Testis (tissue), 5 donors: ENCODE measurements at regions of chr1 and their contacts with region 1.

Region 1: DNA sequence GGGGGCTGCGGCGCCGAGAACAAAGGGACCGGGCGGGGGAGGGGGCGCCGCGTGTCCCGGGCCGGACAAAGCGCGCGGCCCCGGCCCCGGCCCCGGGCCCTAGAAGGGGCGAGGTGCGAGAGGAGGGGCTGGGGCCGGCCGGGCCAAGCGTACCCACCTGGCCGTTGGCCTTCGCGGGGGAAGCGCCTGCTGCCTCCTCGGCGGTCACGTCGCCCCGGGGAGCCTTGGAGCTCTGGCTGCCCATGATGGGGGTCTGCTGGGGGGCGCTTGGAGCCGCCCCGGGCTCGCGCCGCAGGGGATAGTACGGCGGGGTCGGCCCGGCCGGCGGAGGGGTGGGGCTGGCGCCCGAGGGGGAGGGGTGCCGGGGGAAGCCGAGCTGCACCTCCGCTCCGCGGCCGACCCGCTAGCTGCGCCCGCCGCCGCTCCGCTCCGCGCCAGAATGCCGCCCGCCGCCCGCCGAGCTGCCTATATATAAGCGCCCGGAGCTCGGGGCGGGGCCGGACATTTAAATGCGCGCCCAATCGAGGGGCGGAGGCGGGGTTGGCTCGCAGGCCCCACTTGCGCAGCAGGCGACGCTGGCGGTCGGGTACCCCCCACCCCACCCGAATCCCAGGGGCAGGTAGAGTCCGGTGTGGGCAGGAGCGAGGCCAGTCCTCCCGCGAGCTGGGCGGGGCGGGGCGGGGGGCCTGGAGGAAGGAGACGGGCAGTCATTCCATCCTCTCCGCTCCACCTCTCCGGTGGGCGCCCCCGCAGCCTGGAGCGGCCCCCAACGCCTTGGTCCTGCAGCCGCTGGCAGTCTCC is at the start of gene MARCKSL1:
- DNase-seq: peak; percentile 93
- H3K4me3 ChIP-seq: peak within 1 kb of the TSS; percentile 75 to 94
- H3K27ac ChIP-seq: peak within 1 kb of the TSS; percentile 81 to 96
- H3K4me1 ChIP-seq: peaks cover 51% of the 10 kb centered on the region
- H3K27me3 ChIP-seq: no peaks in the 10 kb centered on the region
- CTCF ChIP-seq: no peak
- POLR2A ChIP-seq: peak; percentile 74
- total RNA-seq, gene MARCKSL1: 288 to 312 TPM

Region 2: GRCh38 chr1:32013386-32014198 is 322.4 kb before region 1 on chr1 and contains the start of gene KHDRBS1:
- intact Hi-C with region 1: no loop called
- DNase-seq: peak; percentile 99
- H3K4me3 ChIP-seq: peak within 1 kb of the TSS; percentile 86 to 100
- H3K27ac ChIP-seq: peak within 1 kb of the TSS; percentile 92 to 99
- H3K4me1 ChIP-seq: peaks cover 14% of the 10 kb centered on the region
- H3K27me3 ChIP-seq: no peaks in the 10 kb centered on the region
- CTCF ChIP-seq: peak in 1 of 3 experiments; percentile 19
- POLR2A ChIP-seq: peak; percentile 46
- total RNA-seq, gene KHDRBS1: 90.4 to 95.0 TPM

Region 3: GRCh38 chr1:32247983-32248889 is 87.8 kb before region 1 on chr1:
- intact Hi-C with region 1: loop called (anchors 10 kb)
- DNase-seq: peak; percentile 93
- H3K4me3 ChIP-seq: peak overlapping the region in 1 of 2 donors; percentile 27
- H3K27ac ChIP-seq: peak overlapping the region; percentile 18 to 52
- H3K4me1 ChIP-seq: peaks cover 40% of the 10 kb centered on the region
- H3K27me3 ChIP-seq: no peaks in the 10 kb centered on the region
- CTCF ChIP-seq: peak; percentile 29 to 77 (median 66)
- POLR2A ChIP-seq: no peak

Region 4: DNA sequence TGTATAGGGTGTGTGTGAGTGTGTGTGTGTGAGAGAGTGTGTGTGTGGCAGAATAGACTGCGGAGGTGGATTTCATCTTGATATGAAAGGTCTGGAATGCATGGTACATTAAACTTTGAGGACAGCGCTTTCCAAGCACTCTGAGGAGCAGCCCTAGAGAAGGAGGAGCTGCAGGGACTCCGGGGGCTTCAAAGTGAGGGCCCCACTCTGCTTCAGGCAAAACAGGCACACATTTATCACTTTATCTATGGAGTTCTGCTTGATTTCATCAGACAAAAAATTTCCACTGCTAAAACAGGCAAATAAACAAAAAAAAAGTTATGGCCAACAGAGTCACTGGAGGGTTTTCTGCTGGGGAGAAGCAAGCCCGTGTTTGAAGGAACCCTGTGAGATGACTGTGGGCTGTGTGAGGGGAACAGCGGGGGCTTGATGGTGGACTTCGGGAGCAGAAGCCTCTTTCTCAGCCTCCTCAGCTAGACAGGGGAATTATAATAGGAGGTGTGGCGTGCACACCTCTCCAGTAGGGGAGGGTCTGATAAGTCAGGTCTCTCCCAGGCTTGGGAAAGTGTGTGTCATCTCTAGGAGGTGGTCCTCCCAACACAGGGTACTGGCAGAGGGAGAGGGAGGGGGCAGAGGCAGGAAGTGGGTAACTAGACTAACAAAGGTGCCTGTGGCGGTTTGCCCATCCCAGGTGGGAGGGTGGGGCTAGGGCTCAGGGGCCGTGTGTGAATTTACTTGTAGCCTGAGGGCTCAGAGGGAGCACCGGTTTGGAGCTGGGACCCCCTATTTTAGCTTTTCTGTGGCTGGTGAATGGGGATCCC is 62.4 kb before region 1 on chr1:
- intact Hi-C with region 1: no loop called
- DNase-seq: no peak
- H3K4me3 ChIP-seq: no peak overlapping the region
- H3K27ac ChIP-seq: no peak overlapping the region
- H3K4me1 ChIP-seq: no peaks in the 10 kb centered on the region
- H3K27me3 ChIP-seq: no peaks in the 10 kb centered on the region
- CTCF ChIP-seq: no peak
- POLR2A ChIP-seq: no peak

Region 5: DNA sequence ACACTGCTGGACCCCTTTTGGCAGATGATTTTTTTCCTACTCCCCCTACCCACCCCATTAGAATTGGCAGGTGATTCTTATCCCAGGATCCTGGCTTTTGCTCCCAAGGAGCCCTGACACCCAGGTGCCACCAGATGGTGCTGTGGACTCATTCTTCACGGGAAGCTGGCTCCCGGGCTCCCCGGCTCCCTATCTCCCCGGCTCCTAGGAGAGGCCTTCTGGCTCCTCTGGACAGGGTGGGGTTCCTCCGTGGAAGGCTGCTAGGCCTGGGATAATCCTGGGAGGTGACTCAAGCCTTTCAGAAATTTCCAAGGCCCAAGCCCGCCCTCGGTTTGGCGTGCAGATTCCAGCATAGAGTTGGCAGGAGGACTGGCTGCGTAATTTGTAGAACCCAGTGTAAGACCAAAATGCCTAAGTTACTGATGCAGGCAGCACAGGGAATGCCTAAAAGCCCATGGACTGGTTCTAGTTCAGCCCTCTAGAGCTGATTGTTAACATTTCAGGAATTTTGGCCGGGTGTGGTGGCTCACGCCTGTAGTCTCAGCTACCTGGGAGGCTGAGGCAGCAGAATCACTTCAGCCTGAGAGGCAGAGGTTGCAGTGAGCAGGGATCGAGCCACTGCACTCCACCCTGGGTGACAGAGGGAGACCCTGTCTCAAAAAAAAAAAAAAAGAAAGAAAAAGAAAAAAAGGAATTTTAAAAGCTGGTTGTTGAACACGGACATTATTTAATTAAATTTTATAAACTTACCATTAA is 65.1 kb after region 1 on chr1:
- intact Hi-C with region 1: no loop called
- DNase-seq: peak; percentile 91
- H3K4me3 ChIP-seq: no peak overlapping the region
- H3K27ac ChIP-seq: peak overlapping the region in 1 of 2 donors; percentile 57
- H3K4me1 ChIP-seq: no peaks in the 10 kb centered on the region
- H3K27me3 ChIP-seq: no peaks in the 10 kb centered on the region
- CTCF ChIP-seq: peak; percentile 66 to 88 (median 74)
- POLR2A ChIP-seq: no peak

Region 6: DNA sequence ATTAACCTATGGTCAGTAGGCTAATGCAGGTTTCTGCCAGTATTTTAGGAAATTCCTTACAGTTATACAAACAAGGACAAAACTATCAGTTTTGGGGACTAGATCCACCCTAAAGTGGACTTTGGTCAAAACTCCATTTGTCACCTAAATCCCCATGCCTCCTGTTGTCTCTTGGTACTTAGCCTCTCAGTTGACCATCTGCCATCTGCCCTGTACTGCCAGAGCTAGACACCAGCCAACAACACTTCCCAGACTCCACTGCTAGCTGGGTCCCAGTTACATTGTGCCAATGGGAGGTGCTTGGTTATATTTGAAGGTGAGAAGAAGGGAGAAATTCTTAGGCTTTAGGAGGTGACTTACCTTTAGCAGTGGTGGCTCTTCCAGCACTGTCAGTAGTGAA is 75.3 kb after region 1 on chr1:
- intact Hi-C with region 1: no loop called
- DNase-seq: no peak
- H3K4me3 ChIP-seq: no peak overlapping the region
- H3K27ac ChIP-seq: no peak overlapping the region
- H3K4me1 ChIP-seq: no peaks in the 10 kb centered on the region
- H3K27me3 ChIP-seq: no peaks in the 10 kb centered on the region
- CTCF ChIP-seq: no peak
- POLR2A ChIP-seq: no peak